Activated naive CD4-positive, alpha-beta T cell treated with anti-CD3 and anti-CD28 coated beads for 36 hours (primary cell): ENCODE measurements at regions of chr10 and their contacts with region 1.

Region 1: DNA sequence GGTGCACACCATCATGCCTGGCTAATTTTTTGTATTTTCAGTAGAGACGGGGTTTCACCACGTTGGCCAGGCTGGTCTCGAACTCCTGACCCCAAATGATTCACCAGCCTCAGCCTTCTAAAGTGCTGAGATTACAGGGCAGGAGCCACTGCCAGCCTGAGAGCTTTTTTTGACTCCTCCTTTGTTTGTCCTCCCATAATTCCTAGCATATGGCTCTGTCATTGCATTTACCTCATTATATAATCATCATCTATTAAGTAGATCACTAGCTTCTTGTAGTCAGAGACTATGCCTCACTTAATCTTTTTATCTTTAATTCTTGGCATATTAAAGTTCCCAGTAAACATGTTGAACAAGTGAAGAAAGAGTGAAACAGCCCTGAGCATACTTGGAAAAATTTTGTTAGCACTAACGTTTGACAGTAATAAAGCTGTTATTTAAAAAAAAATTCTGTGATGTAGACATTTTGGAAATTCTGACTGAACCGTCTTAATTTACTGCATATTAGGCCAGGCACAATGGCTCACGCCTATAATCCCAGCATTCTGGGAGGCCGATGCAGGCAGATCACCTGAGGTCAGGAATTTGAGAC is 82.0 kb downstream of the CPEB3 start:
- DNase-seq: no peak
- H3K4me3 Mint-ChIP-seq: no peak overlapping the region
- H3K27ac Mint-ChIP-seq: no peak overlapping the region
- H3K4me1 Mint-ChIP-seq: peaks cover 4% of the 10 kb centered on the region
- H3K27me3 Mint-ChIP-seq: no peaks in the 10 kb centered on the region

Region 2: DNA sequence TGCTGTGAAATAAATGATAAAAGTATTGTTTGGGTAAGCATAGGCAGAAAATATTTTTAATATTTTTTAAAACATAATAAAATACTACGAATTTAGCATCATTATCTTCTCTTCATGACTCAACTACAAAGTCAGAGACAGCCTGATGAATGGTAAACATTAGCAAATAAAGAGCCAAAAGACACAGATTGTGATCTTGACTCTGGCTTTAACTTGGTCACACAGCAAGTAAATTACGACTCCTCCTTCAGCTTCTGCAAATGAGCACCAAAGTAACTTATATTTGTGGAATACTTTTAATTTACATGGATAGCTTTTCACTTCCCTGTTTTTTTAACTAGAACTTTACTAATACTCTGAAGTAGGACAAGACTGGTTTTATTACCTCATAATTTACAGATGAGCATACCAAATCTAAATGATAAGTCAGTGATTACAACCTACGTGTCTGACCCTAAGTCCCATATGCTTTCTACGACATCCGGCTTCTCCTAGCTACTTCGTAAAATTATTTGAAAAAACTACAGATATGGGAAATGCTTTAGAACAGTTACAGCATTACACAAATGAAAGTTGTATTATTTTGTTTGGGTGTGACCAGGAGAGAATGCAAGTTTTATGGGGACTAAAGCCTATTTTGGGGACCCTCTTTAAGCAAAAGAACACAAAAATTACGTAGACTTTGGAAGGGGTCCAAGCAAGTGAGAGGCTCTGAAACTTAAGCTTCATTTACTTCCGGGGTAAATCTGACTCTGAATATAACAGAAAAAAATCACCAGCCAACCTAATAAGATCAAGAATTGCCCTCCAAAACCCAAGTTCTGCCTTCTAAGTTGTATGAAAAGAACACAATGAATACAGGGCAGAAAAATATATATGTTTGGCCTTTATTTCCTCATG is 51.7 kb before region 1 on chr10:
- CTCF ChIA-PET with region 1: no interaction called
- intact Hi-C with region 1: no loop called
- DNase-seq: no peak
- H3K4me3 Mint-ChIP-seq: no peak overlapping the region
- H3K27ac Mint-ChIP-seq: no peak overlapping the region
- H3K4me1 Mint-ChIP-seq: no peaks in the 10 kb centered on the region
- H3K27me3 Mint-ChIP-seq: no peaks in the 10 kb centered on the region

Region 3: DNA sequence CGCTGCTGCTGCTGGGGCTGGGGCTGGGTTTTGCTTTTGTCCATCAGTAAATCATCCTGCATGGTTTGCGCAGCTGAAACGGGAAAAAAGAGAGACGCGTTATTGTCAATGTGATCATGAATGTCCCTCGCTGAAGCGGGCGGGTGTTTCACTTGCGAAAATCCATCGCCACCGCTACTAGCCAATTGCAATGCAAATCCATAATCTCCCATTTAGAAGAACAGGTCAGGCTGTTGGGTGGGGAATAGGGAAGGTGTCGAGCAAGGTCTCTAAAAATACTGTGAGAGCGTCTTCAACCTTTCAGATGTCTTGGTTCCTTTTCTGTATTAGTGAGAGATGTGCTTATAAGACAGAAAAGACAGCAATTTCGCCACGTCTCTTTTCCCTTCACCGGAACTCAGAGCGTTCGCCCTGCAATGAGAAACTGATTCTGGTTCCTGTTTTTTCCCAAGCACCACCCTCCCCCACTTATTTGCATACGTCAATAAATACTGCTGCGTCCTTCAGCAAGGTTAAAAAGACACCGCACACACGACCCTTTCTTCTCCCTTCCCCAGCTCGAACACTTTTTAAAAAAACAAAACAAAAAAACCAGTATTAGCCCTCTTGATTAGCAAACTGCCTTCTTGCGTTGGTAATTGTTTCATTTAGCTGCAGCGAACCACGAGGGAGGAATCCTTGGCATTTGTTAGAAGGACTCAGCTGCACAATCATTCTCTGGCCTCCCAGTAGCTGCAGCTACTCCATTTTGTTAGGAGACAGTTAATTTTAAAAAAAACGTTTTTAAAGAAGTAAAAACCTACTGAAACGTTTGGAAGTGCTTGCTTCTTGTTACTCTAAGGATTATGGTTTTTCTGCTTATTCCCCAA is 31.7 kb after region 1 on chr10:
- CTCF ChIA-PET with region 1: no interaction called
- intact Hi-C with region 1: loop called (anchors 1 kb)
- DNase-seq: peak; percentile 30
- H3K4me3 Mint-ChIP-seq: peak overlapping the region; percentile 73
- H3K27ac Mint-ChIP-seq: no peak overlapping the region
- H3K4me1 Mint-ChIP-seq: peaks cover 13% of the 10 kb centered on the region
- H3K27me3 Mint-ChIP-seq: peaks cover 9% of the 10 kb centered on the region